ENCODE measurements at regions of chr12 and their contacts with region 1.

Region 1: GRCh38 chr12:80472902-80473500 is 29.0 kb downstream of the PTPRQ start:
- DNase-seq: no peak
- ATAC-seq: peak; percentile 62 to 85
- H3K4me3 ChIP-seq: no peak overlapping the region
- H3K27ac ChIP-seq: no peak overlapping the region
- H3K4me1 ChIP-seq: peaks cover 0 to 4% of the 10 kb centered on the region in 2 donors
- H3K27me3 ChIP-seq: no peaks in the 10 kb centered on the region
- CTCF ChIP-seq: peak; percentile 46 to 79 (median 58)
- POLR2A ChIP-seq: no peak

Region 2: DNA sequence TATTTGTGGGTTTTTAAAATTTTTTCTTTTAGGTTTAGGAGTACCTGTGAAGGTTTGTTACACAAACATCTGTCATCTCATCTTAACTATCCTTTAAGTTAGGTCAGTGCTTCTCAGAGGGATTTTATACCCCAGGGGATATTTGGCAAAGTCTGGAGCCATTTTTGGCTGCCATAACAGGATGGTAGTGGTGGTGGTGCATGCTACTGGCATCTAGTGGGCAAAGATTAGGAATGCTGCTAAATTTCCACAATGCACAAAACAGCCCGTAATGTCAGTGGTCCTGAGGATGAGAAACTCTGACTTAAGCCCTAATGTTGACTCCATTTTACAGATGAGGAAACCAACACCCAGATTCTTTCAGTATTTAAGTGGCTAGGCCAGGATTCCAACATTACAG is 149.3 kb after region 1 on chr12:
- in situ Hi-C with region 1: no loop called
- intact Hi-C with region 1: loop called (anchors 10 kb)
- DNase-seq: no peak
- ATAC-seq: no peak
- H3K4me3 ChIP-seq: no peak overlapping the region
- H3K27ac ChIP-seq: no peak overlapping the region
- H3K4me1 ChIP-seq: peaks cover 12 to 19% of the 10 kb centered on the region in 2 donors
- H3K27me3 ChIP-seq: no peaks in the 10 kb centered on the region
- CTCF ChIP-seq: no peak
- POLR2A ChIP-seq: no peak

Region 3: GRCh38 chr12:80679346-80680131 is 206.5 kb after region 1 on chr12:
- in situ Hi-C with region 1: no loop called
- intact Hi-C with region 1: loop called (anchors 5 kb)
- DNase-seq: no peak
- ATAC-seq: peak; percentile 47 to 55
- H3K4me3 ChIP-seq: peak overlapping the region in 2 of 4 donors; percentile 11 to 29
- H3K27ac ChIP-seq: peak overlapping the region; percentile 52 to 84 (median 82)
- H3K4me1 ChIP-seq: peaks cover 60 to 63% of the 10 kb centered on the region in 2 donors
- H3K27me3 ChIP-seq: no peaks in the 10 kb centered on the region
- CTCF ChIP-seq: no peak
- POLR2A ChIP-seq: no peak

Region 4: GRCh38 chr12:80763874-80764273 is 290.9 kb after region 1 on chr12:
- in situ Hi-C with region 1: loop called (anchors 5 to 10 kb)
- intact Hi-C with region 1: loop called (anchors 1 kb)
- DNase-seq: no peak
- ATAC-seq: peak; percentile 33 to 57
- H3K4me3 ChIP-seq: no peak overlapping the region
- H3K27ac ChIP-seq: no peak overlapping the region
- H3K4me1 ChIP-seq: no peaks in the 10 kb centered on the region
- H3K27me3 ChIP-seq: no peaks in the 10 kb centered on the region
- CTCF ChIP-seq: peak; percentile 49 to 72 (median 58)
- POLR2A ChIP-seq: no peak

Region 5: GRCh38 chr12:80794551-80794950 is 321.6 kb after region 1 on chr12:
- in situ Hi-C with region 1: no loop called
- intact Hi-C with region 1: no loop called
- DNase-seq: no peak
- ATAC-seq: no peak
- H3K4me3 ChIP-seq: no peak overlapping the region
- H3K27ac ChIP-seq: no peak overlapping the region
- H3K4me1 ChIP-seq: no peaks in the 10 kb centered on the region
- H3K27me3 ChIP-seq: no peaks in the 10 kb centered on the region
- CTCF ChIP-seq: no peak
- POLR2A ChIP-seq: no peak

Measured in gastrocnemius medialis (tissue), 4 donors.